Mammary epithelial cell (primary cell): ENCODE measurements at regions of chr7 and their contacts with region 1.

Region 1: DNA sequence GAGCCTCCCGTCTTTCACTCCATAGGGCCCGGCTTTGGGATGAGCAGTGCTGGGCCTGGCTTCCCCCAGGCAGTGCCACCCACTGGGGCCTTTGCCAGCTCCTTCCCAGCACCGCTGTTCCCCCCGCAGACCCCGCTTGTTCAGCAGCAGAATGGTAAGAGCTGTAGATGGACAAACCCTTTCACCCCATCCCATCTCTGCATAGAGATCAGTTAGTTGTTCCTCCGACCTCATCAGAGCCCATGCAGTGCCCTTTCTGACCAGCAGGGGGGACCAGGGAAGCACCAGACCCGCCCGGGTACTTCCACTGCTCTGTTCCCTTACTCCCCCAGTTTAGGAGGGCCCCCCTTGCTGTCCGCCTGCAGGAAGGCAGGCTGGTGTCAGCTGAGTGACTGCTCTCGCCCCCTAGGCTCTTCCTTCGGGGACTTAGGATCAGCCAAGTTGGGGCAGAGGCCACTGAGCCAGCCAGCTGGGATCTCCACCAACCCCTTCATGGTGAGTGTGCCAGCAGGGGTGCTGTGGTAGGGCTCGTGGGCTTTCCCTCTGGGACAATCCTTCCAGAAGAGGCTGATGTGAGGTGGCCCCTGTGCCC is 9.8 kb downstream of the SAP25 start:
- DNase-seq: peak; percentile 43
- H3K4me3 ChIP-seq: no peak overlapping the region
- H3K27ac ChIP-seq: no peak overlapping the region
- H3K4me1 ChIP-seq: no peaks in the 10 kb centered on the region
- H3K27me3 ChIP-seq: no peaks in the 10 kb centered on the region
- CTCF ChIP-seq: peak; percentile 95 to 97

Region 2: DNA sequence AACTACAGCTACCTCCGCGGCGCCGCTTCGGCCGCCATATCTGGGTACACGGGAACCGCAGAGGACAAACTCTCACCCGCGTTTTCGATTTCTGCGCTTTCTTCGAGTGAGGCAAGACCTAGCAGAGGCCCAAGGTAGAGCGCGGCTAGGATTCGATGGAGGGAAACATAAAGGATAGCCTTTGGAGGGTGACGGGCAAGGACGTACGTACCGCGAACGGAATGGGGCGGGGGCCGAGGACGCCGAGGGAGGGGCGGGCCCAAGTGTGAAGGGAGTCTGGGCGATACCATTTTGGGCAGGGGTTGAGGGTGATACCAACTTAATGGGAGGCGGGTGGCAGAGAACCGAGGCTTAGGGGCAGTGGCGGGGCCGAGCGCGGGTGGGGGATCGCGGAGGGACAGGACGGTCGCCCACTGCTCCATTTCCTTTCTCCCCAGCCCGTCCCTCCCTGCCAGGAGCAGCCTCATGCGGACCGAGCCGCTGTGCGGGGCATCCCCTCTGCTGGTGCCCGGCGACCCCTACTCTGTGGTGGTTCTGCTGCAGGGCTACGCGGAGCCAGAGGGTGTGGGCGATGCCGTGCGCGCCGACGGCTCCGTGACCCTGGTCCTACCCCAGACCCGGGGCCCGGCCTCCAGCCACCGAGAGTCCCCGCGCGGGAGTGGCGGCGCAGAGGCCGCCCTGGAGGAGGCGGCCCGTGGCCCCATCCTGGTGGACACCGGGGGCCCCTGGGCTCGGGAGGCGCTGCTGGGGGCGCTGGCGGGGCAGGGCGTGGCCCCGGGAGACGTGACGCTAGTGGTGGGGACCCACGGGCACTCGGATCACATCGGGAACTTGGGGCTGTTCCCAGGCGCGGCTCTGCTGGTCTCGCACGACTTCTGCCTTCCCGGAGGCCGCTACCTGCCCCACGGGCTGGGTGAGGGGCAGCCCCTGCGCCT is 436.7 kb before region 1 on chr7 and contains the start of gene MBLAC1:
- CTCF ChIA-PET with region 1: no interaction called
- dilution Hi-C with region 1: no loop called
- in situ Hi-C with region 1: no loop called
- intact Hi-C with region 1: no loop called
- DNase-seq: peak; percentile 86
- H3K4me3 ChIP-seq: peak within 1 kb of the TSS; percentile 62 to 95 (median 90)
- H3K27ac ChIP-seq: peak within 1 kb of the TSS; percentile 90
- H3K4me1 ChIP-seq: peaks cover 7% of the 10 kb centered on the region
- H3K27me3 ChIP-seq: no peaks in the 10 kb centered on the region
- CTCF ChIP-seq: no peak
- total RNA-seq, gene MBLAC1: 1.2 to 1.5 TPM

Region 3: DNA sequence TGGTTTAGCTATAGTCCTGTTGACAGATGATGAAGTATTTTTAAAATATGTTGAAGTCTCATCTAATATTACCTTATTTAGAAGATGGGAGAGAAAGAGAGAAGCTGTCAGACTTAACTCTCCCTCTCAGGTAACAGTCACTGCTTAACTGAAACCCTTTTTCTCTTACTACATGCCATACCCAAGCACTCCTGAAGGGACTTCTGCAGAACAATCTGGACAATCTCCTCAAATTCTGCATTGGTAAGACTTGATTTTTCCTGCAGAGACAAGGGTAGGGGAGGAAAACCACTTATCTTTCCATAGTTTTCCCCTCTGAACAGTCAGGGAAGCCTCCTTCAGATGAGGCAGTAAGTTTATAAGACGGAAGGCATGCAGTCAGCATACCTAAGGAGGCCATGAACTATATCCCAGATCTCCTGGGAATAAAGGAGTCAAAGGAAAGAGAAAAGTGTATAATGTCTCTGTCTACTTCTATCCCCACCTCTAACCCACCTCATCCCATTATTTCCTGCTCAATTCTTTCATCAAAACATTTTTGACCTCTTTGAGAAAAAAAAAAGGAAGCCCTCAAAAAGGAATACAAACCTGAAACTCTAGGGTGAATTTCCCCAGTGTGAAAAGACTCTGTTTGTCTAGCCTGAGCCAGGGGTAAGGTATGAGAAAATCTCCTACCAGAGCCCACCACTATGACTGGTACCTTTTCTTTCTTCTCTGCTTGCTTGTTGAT is 144.8 kb before region 1 on chr7:
- CTCF ChIA-PET with region 1: no interaction called
- dilution Hi-C with region 1: no loop called
- in situ Hi-C with region 1: no loop called
- intact Hi-C with region 1: no loop called
- DNase-seq: no peak
- H3K4me3 ChIP-seq: no peak overlapping the region
- H3K27ac ChIP-seq: no peak overlapping the region
- H3K4me1 ChIP-seq: no peaks in the 10 kb centered on the region
- H3K27me3 ChIP-seq: no peaks in the 10 kb centered on the region
- CTCF ChIP-seq: no peak

Region 4: DNA sequence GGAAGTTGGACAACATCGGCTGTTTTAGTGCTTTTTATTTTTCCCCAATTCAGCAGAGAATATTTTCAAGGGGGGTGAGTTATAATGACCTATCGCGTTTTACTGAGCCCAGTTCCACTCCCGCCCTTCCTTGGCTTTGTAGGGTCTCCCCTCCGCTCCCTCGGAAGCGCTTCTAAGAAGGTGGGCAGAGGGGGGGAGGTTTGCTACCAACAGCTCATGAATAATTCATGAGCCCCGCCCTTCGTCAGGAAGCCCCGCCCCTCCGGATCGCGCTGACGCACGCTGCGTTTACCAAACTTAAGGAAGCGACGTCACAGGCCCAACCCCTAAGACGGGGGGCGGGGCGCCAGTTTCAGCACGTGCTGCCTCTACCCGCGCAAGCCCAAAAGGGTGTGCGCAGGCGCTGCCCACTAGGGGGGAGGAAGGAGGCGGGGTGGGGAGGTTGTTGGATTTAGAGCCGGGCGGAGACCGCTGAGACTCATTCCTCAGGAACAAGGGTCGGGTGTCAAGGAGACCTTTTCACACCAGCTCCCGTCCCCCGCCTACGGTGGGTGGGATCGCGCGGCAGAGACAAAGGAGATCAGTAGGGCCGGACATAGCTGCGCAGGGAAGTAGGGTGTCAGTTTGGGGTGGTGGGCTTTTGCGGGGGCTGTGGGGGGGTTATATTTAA is 134.8 kb before region 1 on chr7:
- CTCF ChIA-PET with region 1: interaction called, 5 read pairs
- dilution Hi-C with region 1: loop called (anchors 5 kb)
- in situ Hi-C with region 1: no loop called
- intact Hi-C with region 1: no loop called
- DNase-seq: peak; percentile 99
- H3K4me3 ChIP-seq: peak overlapping the region; percentile 83 to 91 (median 84)
- H3K27ac ChIP-seq: peak overlapping the region; percentile 95
- H3K4me1 ChIP-seq: peaks cover 20% of the 10 kb centered on the region
- H3K27me3 ChIP-seq: no peaks in the 10 kb centered on the region
- CTCF ChIP-seq: no peak

Region 5: GRCh38 chr7:100611974-100612729 is 48.2 kb after region 1 on chr7 and contains the start of gene MOSPD3:
- CTCF ChIA-PET with region 1: no interaction called
- dilution Hi-C with region 1: loop called (anchors 5 kb)
- in situ Hi-C with region 1: no loop called
- intact Hi-C with region 1: no loop called
- DNase-seq: peak; percentile 98
- H3K4me3 ChIP-seq: peak within 1 kb of the TSS; percentile 67 to 84 (median 70)
- H3K27ac ChIP-seq: peak within 1 kb of the TSS; percentile 86
- H3K4me1 ChIP-seq: peaks cover 6% of the 10 kb centered on the region
- H3K27me3 ChIP-seq: no peaks in the 10 kb centered on the region
- CTCF ChIP-seq: no peak
- total RNA-seq, gene MOSPD3: 6.8 to 16.3 TPM

Region 6: DNA sequence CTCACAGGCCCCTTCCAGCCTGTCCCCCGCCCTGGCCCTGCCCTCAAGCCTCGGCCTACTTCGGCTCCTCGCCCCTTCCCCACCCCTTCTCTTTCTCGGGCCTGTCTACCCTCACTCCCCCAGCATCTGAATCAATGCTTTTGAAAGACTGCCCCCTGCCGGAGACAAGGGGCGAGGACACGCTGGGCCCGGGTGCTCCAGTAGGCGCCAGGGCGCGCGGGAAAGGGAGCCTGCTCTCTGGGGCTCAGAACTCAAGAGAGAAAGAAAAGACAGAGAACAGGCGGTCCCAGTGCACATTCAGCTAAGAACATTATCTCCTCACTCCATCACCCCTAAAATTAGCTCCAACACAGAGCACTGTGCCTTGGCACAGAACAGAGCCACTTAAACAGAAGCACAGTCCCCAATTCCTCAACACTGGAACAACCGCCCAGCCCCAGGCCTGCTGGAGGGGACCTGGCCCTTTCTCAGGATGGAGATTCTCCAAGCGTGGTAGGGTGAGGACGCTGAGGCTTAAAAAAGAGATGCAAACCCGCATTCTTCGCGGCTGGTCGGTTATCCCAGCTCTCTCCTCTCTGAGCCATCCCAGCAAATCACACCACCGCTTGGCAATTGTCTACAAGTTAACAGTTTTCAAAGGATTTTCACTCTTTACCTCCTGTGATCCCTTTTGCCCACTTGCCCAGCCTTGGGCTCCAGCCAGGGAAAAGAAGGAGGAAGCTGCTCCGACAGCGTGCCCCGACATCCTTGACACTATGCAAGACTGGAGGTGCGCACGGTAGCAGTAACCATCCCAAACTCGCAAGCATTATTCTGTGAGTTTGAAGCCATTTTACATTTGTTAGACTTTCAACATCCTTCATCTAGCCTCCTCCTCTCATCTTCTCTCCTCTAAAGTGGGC is 128.0 kb after region 1 on chr7:
- CTCF ChIA-PET with region 1: no interaction called
- dilution Hi-C with region 1: no loop called
- in situ Hi-C with region 1: loop called in 1 of 2 experiments (anchors 10 kb)
- intact Hi-C with region 1: loop called (anchors 1 kb)
- DNase-seq: peak; percentile 50
- H3K4me3 ChIP-seq: peak overlapping the region in 2 of 3 experiments; percentile 86 to 95
- H3K27ac ChIP-seq: no peak overlapping the region
- H3K4me1 ChIP-seq: peaks cover 29% of the 10 kb centered on the region
- H3K27me3 ChIP-seq: no peaks in the 10 kb centered on the region
- CTCF ChIP-seq: peak; percentile 89 to 93